Esophagus squamous epithelium (tissue), 5 donors: ENCODE measurements at regions of chr17 and their contacts with region 1.

Region 1: GRCh38 chr17:49715717-49716279 is 8.0 kb upstream of the SLC35B1 start:
- DNase-seq: no peak
- H3K4me3 ChIP-seq: no peak overlapping the region
- H3K27ac ChIP-seq: peak overlapping the region in 2 of 4 donors; percentile 2 to 10
- H3K4me1 ChIP-seq: no peaks in the 10 kb centered on the region
- H3K27me3 ChIP-seq: no peaks in the 10 kb centered on the region
- CTCF ChIP-seq: no peak
- POLR2A ChIP-seq: no peak

Region 2: DNA sequence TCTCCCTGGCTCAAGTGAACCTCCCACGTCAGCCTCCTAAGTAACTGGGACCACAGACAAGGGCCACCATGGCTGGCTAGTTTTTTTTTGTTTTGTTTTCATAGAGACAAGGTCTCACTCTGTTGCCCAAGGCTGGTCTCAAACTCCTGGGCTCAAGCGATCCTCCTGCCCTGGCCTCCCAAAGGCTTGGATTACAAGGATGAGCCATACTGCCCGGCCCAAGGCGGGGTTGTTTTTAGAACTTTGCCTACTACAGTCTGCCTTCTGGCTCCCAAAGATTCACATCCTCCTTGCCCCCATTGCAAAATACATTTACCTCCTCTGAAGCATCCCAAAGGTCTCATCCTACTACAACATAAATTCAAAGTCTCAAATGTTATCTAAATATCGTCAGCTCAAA is 435.7 kb before region 1 on chr17:
- intact Hi-C with region 1: no loop called
- DNase-seq: no peak
- H3K4me3 ChIP-seq: no peak overlapping the region
- H3K27ac ChIP-seq: no peak overlapping the region
- H3K4me1 ChIP-seq: no peaks in the 10 kb centered on the region
- H3K27me3 ChIP-seq: no peaks in the 10 kb centered on the region
- CTCF ChIP-seq: no peak
- POLR2A ChIP-seq: no peak

Region 3: DNA sequence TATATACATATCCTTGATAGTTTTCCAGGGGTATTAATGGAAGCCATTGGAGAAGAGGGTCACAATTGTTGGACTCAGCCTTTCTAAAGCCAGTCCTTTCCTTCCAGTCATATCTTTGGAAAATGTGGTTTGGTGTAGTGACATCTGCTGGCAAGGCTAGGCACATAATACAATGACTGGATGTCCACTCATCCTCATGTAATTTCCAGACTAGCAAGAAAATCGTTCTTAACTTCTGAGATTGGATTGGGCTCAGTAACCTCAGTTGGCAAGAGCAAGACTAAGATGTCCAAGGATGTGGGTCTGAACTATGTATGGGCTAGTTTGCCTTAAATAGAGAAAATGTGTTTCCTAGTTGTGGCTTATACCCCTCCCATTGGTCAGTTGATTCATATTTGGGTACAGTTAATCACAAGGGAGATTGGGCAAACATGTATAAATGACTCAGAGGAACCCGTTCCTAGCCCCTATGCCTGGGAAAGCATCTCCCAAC is 64.0 kb after region 1 on chr17:
- intact Hi-C with region 1: no loop called
- DNase-seq: no peak
- H3K4me3 ChIP-seq: no peak overlapping the region
- H3K27ac ChIP-seq: peak overlapping the region in 3 of 4 donors; percentile 46 to 80 (median 59)
- H3K4me1 ChIP-seq: peaks cover 0 to 63% (median 39%) of the 10 kb centered on the region in 3 donors
- H3K27me3 ChIP-seq: no peaks in the 10 kb centered on the region
- CTCF ChIP-seq: peak; percentile 22 to 64 (median 47)
- POLR2A ChIP-seq: no peak

Region 4: GRCh38 chr17:49809056-49809455 is 93.3 kb after region 1 on chr17:
- intact Hi-C with region 1: no loop called
- DNase-seq: no peak
- H3K4me3 ChIP-seq: no peak overlapping the region
- H3K27ac ChIP-seq: no peak overlapping the region
- H3K4me1 ChIP-seq: peaks cover 0 to 7% (median 0%) of the 10 kb centered on the region in 3 donors
- H3K27me3 ChIP-seq: no peaks in the 10 kb centered on the region
- CTCF ChIP-seq: no peak
- POLR2A ChIP-seq: no peak

Region 5: GRCh38 chr17:49851387-49852291 is 135.8 kb after region 1 on chr17:
- intact Hi-C with region 1: loop called (anchors 10 kb)
- DNase-seq: no peak
- H3K4me3 ChIP-seq: peak overlapping the region; percentile 41 to 79 (median 60)
- H3K27ac ChIP-seq: peak overlapping the region; percentile 39 to 73 (median 54)
- H3K4me1 ChIP-seq: peaks cover 8 to 28% (median 10%) of the 10 kb centered on the region in 3 donors
- H3K27me3 ChIP-seq: peaks cover 0 to 5% (median 0%) of the 10 kb centered on the region in 4 donors
- CTCF ChIP-seq: peak; percentile 26 to 70 (median 64)
- POLR2A ChIP-seq: no peak